ENCODE measurements at regions of chr1 and their contacts with region 1.

Region 1: DNA sequence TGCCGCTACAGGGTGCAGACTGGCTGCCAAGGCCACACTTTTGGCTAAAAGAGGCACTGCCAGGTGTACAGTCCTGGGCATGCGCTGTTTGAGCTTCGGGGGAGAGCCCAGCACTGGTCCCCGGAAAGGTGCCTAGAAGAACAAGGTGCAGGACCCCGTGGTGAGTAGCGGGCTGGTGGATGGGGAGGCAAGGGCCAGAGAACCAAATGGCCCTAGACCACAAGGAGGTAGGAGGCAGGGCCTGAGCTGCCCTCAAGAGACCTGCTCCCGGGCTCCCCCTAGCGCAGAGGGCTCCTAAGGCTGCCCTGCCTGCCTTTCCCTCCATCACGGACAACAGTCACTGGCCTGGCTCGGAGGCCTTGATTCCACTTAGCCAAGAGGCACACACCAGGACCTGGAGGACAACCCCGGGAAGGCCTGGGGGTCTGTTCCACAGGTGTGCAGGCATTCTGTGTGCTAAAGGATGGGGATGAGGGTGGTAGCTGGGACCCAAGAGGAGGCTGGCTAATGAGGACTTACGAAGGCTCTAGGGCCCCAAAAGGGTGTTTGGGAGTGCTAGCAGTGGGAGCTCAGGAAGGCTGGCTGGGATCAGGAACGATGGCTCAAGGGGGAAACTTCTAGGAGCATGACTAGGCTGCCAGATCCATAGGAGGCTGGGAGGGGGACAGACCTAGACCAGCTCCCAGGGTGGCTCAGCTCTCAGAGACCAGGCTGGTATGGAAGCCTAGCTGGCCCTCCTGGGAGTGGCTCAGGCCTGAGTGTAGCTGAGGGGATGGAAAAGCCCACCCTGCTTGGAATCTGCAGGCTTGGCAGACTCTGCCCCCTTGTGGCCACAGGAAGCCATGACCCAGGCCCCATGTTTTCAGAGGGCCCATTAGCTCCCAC is 742 bp downstream of the ARTN start:
- DNase-seq: peak; percentile 84
- ATAC-seq: peak; percentile 73
- H3K4me3 Mint-ChIP-seq: peak overlapping the region; percentile 16
- H3K27ac Mint-ChIP-seq: no peak overlapping the region
- H3K4me1 Mint-ChIP-seq: peaks cover 15% of the 10 kb centered on the region
- H3K27me3 Mint-ChIP-seq: peaks cover 25% of the 10 kb centered on the region

Region 2: DNA sequence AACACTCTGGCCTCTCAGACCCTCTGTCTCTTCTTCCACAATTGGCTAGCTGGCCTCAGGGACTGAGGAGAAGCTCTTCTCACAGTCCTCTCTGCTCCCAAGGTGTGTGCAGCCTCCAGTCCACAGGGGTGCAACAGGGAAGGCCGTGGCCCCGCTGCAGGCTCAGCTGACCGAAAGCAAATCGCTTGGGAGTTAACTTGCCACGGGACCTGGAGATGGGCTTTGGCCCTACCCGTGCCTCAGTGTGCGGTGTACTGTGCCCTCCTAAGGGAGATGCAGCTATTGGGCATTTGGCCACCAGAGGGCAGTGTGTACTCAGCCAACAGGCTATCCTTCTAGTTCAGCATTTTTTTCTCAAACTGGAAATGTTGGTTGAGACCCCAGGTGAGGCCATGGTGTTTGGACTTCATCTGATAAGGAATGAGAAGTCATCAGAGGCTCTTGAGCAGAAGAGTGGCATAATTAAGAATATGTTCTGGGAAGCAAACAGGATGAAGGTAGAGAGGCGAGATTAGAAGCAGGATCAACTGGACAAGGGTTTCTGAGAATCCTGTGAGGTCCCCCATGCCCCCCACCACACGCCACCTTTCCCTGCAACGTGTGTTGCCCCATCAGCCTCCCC is 707.1 kb before region 1 on chr1:
- CTCF ChIA-PET with region 1: interaction called, 4 read pairs
- POLR2A ChIA-PET with region 1: no interaction called
- intact Hi-C with region 1: loop called in 1 of 2 experiments (anchors 10 kb)
- DNase-seq: peak; percentile 92
- ATAC-seq: peak; percentile 93
- H3K4me3 Mint-ChIP-seq: no peak overlapping the region
- H3K27ac Mint-ChIP-seq: no peak overlapping the region
- H3K4me1 Mint-ChIP-seq: no peaks in the 10 kb centered on the region
- H3K27me3 Mint-ChIP-seq: peaks cover 2% of the 10 kb centered on the region

Region 3: GRCh38 chr1:43769350-43769908 is 164.9 kb before region 1 on chr1:
- CTCF ChIA-PET with region 1: interaction called, 136 read pairs
- POLR2A ChIA-PET with region 1: no interaction called
- intact Hi-C with region 1: no loop called
- DNase-seq: no peak
- ATAC-seq: no peak
- H3K4me3 Mint-ChIP-seq: no peak overlapping the region
- H3K27ac Mint-ChIP-seq: no peak overlapping the region
- H3K4me1 Mint-ChIP-seq: peaks cover 7% of the 10 kb centered on the region
- H3K27me3 Mint-ChIP-seq: no peaks in the 10 kb centered on the region

Region 4: DNA sequence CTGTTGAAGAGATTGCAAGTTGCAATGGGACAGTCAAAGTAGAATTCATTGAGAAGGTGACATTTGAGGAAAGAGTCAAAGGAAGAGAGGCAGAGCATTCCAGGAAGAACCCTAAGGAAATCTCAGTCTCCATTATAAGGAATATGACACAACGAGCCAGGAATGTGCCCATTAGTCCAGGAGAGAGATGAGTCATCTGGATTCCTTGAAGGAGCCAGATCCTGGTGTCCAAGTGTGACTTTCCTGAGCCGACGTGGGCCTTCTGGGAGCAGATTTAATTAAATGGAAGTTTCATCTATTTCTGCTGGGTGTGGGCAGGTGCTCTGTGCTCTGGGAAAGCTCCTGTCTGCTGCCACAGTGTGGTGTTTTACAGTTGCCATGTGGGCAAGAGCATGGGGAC is 112.3 kb before region 1 on chr1:
- CTCF ChIA-PET with region 1: interaction called, 11 read pairs
- POLR2A ChIA-PET with region 1: no interaction called
- intact Hi-C with region 1: no loop called
- DNase-seq: no peak
- ATAC-seq: no peak
- H3K4me3 Mint-ChIP-seq: no peak overlapping the region
- H3K27ac Mint-ChIP-seq: no peak overlapping the region
- H3K4me1 Mint-ChIP-seq: no peaks in the 10 kb centered on the region
- H3K27me3 Mint-ChIP-seq: no peaks in the 10 kb centered on the region

Region 5: GRCh38 chr1:44049839-44050238 is 115.5 kb after region 1 on chr1:
- CTCF ChIA-PET with region 1: interaction called, 11 read pairs
- POLR2A ChIA-PET with region 1: no interaction called
- intact Hi-C with region 1: loop called in 1 of 2 experiments (anchors 5 kb)
- DNase-seq: no peak
- ATAC-seq: no peak
- H3K4me3 Mint-ChIP-seq: no peak overlapping the region
- H3K27ac Mint-ChIP-seq: no peak overlapping the region
- H3K4me1 Mint-ChIP-seq: peaks cover 21% of the 10 kb centered on the region
- H3K27me3 Mint-ChIP-seq: peaks cover 8% of the 10 kb centered on the region

Region 6: GRCh38 chr1:44174630-44175029 is 240.3 kb after region 1 on chr1:
- CTCF ChIA-PET with region 1: no interaction called
- POLR2A ChIA-PET with region 1: no interaction called
- intact Hi-C with region 1: no loop called
- DNase-seq: no peak
- ATAC-seq: no peak
- H3K4me3 Mint-ChIP-seq: no peak overlapping the region
- H3K27ac Mint-ChIP-seq: no peak overlapping the region
- H3K4me1 Mint-ChIP-seq: no peaks in the 10 kb centered on the region
- H3K27me3 Mint-ChIP-seq: peaks cover 3% of the 10 kb centered on the region

Region 7: GRCh38 chr1:44460107-44460882 is 526.0 kb after region 1 on chr1:
- CTCF ChIA-PET with region 1: no interaction called
- POLR2A ChIA-PET with region 1: no interaction called
- intact Hi-C with region 1: no loop called
- DNase-seq: no peak
- ATAC-seq: no peak
- H3K4me3 Mint-ChIP-seq: no peak overlapping the region
- H3K27ac Mint-ChIP-seq: no peak overlapping the region
- H3K4me1 Mint-ChIP-seq: no peaks in the 10 kb centered on the region
- H3K27me3 Mint-ChIP-seq: peaks cover 34% of the 10 kb centered on the region